A549 (cell line): ENCODE measurements at regions of chr10 and their contacts with region 1.

Region 1: GRCh38 chr10:77251297-77252013 is 386.2 kb downstream of the KCNMA1 start:
- DNase-seq: peak; percentile 63 to 64
- ATAC-seq: peak; percentile 91 to 95
- H3K4me3 ChIP-seq: no peak overlapping the region
- H3K27ac ChIP-seq: peak overlapping the region; percentile 18 to 51; a peak in 3 of 6 replicates
- H3K4me1 ChIP-seq: peaks cover 22% of the 10 kb centered on the region
- CTCF ChIP-seq: peak; percentile 83
- EP300 ChIP-seq: no peak
- POLR2A ChIP-seq: no peak
- RAD21 ChIP-seq: peak; percentile 92 to 94

Region 2: GRCh38 chr10:77156406-77156879 is 95.0 kb before region 1 on chr10:
- CTCF ChIA-PET with region 1: no interaction called
- POLR2A ChIA-PET with region 1: no interaction called
- DNase-seq: peak in 1 of 2 experiments; percentile 60
- ATAC-seq: peak; percentile 44 to 66; a peak in 4 of 6 replicates
- H3K4me3 ChIP-seq: no peak overlapping the region
- H3K27ac ChIP-seq: peak overlapping the region; percentile 62 to 81
- H3K4me1 ChIP-seq: peaks cover 55% of the 10 kb centered on the region
- CTCF ChIP-seq: no peak
- EP300 ChIP-seq: peak in 1 of 2 experiments; percentile 46; a peak in 1 of 5 replicates
- POLR2A ChIP-seq: no peak
- RAD21 ChIP-seq: 0 out of 5 replicates have a peak, but pooled peaks of 1 of the 2 experiments have one; percentile 21

Region 3: GRCh38 chr10:77236700-77237099 is 14.8 kb before region 1 on chr10:
- CTCF ChIA-PET with region 1: interaction called, 22 read pairs
- POLR2A ChIA-PET with region 1: no interaction called
- DNase-seq: no peak
- ATAC-seq: no peak
- H3K4me3 ChIP-seq: no peak overlapping the region
- H3K27ac ChIP-seq: no peak overlapping the region
- H3K4me1 ChIP-seq: peaks cover 4% of the 10 kb centered on the region; the same call in 1 of the 3 replicates
- CTCF ChIP-seq: no peak
- EP300 ChIP-seq: no peak
- POLR2A ChIP-seq: no peak
- RAD21 ChIP-seq: no peak

Region 4: GRCh38 chr10:77582710-77583115 is 331.3 kb after region 1 on chr10:
- CTCF ChIA-PET with region 1: no interaction called
- POLR2A ChIA-PET with region 1: no interaction called
- DNase-seq: peak; percentile 55 to 83
- ATAC-seq: peak; percentile 62 to 70; a peak in 5 of 6 replicates
- H3K4me3 ChIP-seq: no peak overlapping the region
- H3K27ac ChIP-seq: peak overlapping the region; percentile 67 to 82
- H3K4me1 ChIP-seq: peaks cover 64% of the 10 kb centered on the region
- CTCF ChIP-seq: no peak
- EP300 ChIP-seq: peak; percentile 22 to 51; a peak in 2 of 5 replicates
- POLR2A ChIP-seq: no peak
- RAD21 ChIP-seq: no peak

Region 5: DNA sequence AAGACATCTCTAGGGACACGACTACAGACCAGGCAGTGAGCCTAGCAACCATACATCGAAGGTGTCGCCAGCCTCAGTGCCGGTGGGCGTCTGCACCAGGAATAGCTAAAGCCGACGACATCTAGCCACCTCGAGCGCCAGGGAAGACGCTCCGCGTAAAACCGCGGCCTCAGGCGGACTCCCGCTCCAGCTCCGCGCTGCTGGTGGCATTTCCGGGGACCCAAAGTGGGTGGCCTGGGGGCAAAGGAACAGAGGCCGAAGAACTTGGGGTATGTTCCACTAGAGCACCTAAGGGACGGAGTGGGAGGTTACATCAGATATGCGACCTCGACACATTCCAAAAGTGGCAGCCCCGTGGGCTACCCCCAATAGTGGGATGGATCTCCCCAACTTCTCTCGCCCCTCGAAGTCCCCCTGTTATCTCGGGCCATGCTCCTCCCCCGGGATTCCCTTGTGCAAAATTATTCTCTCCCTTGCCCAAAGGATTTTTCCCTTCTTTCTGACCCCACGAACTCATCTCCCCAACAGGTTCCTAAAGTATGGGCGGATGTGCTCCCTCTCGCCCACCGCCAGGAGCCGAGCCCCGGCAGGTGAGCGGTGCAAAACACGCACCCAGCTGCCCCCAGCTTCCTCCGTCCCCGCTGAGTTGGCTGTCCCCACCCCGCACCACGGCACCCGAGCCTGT is 385.0 kb after region 1 on chr10:
- CTCF ChIA-PET with region 1: interaction called, 169 read pairs
- POLR2A ChIA-PET with region 1: interaction called, 3 read pairs
- DNase-seq: no peak
- ATAC-seq: no peak; a peak in 1 of 6 replicates
- H3K4me3 ChIP-seq: peak overlapping the region; percentile 90
- H3K27ac ChIP-seq: peak overlapping the region; percentile 83 to 89
- H3K4me1 ChIP-seq: peaks cover 25% of the 10 kb centered on the region; the same call in 2 of the 3 replicates
- CTCF ChIP-seq: no peak
- EP300 ChIP-seq: no peak
- POLR2A ChIP-seq: no peak
- RAD21 ChIP-seq: no peak